GM12878 (cell line): ENCODE measurements at regions of chr2 and their contacts with region 1.

Region 1: GRCh38 chr2:214816134-214816533 is 6.7 kb upstream of the BARD1 start:
- DNase-seq: no peak
- ATAC-seq: no peak
- H3K4me3 ChIP-seq: no peak overlapping the region
- H3K27ac ChIP-seq: no peak overlapping the region
- H3K4me1 ChIP-seq: no peaks in the 10 kb centered on the region
- H3K27me3 ChIP-seq: no peaks in the 10 kb centered on the region
- CTCF ChIP-seq: no peak
- EP300 ChIP-seq: no peak
- POLR2A ChIP-seq: no peak
- RAD21 ChIP-seq: no peak

Region 2: DNA sequence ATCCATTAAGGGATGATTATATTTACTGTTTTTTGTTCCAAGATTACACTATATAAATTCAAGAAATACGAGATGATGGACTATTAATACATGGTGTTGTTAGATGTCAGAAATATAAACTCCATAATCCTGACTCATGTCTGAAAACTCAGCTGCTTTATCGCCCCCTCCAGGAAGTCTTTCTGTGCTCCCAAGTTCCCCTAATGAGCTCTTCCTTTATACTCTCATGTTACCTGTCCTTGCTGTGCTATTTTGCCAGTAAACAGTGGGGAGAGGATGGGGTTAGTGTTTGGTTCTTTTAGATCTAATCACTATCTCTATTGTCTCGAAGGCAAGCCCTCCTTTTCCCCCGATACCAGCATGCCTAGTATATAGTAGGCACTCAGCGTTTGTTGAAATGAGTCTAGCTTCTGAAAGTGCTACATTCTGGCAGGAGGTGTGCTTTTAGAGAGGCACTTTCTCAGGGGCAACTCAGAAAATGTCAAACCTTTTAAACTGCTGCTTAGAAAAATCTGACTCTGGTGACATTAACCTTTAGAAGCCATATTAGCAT is 14.7 kb after region 1 on chr2:
- CTCF ChIA-PET with region 1: interaction called, 18 read pairs
- POLR2A ChIA-PET with region 1: no interaction called
- RAD21 ChIA-PET with region 1: interaction called, 4 read pairs
- SMC1A ChIA-PET with region 1: interaction called, 4 read pairs
- in situ Hi-C with region 1: no loop called
- intact Hi-C with region 1: no loop called
- DNase-seq: no peak
- ATAC-seq: peak; percentile 49
- H3K4me3 ChIP-seq: no peak overlapping the region
- H3K27ac ChIP-seq: no peak overlapping the region
- H3K4me1 ChIP-seq: no peaks in the 10 kb centered on the region
- H3K27me3 ChIP-seq: no peaks in the 10 kb centered on the region
- CTCF ChIP-seq: peak in 2 of 3 experiments; percentile 30 to 49; a peak in 3 of 6 replicates
- EP300 ChIP-seq: no peak
- POLR2A ChIP-seq: no peak
- RAD21 ChIP-seq: peak; percentile 46; the same call in 1 of the 2 replicates

Region 3: DNA sequence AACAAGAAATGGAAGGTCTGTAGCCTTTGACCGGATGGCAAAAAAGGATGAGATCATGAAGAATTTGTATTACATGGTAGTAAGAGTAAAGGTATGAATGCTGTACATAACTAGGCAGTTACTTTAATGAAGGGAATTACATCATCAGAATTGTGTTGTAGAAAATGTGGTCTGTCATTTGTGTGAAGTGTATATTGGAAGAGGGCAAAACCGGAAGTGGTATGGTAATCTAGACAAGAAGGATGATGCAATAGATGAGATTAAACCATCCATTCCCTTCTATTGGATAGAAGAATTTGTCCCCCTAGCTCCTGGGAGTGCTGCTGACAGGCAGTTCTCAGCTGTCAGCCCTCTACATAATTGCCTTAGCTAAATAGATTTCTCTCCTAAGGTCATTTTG is 49.2 kb after region 1 on chr2:
- CTCF ChIA-PET with region 1: no interaction called
- POLR2A ChIA-PET with region 1: no interaction called
- RAD21 ChIA-PET with region 1: no interaction called
- SMC1A ChIA-PET with region 1: no interaction called
- in situ Hi-C with region 1: no loop called
- intact Hi-C with region 1: no loop called
- DNase-seq: no peak
- ATAC-seq: no peak
- H3K4me3 ChIP-seq: no peak overlapping the region
- H3K27ac ChIP-seq: no peak overlapping the region
- H3K4me1 ChIP-seq: no peaks in the 10 kb centered on the region
- H3K27me3 ChIP-seq: no peaks in the 10 kb centered on the region
- CTCF ChIP-seq: no peak
- EP300 ChIP-seq: no peak
- POLR2A ChIP-seq: no peak
- RAD21 ChIP-seq: no peak